KBM-7 (cell line): ENCODE measurements at regions of chr14 and their contacts with region 1.

Region 1: GRCh38 chr14:23068476-23069412 is 11.4 kb upstream of the CDH24 start:
- DNase-seq: peak; percentile 93

Region 2: DNA sequence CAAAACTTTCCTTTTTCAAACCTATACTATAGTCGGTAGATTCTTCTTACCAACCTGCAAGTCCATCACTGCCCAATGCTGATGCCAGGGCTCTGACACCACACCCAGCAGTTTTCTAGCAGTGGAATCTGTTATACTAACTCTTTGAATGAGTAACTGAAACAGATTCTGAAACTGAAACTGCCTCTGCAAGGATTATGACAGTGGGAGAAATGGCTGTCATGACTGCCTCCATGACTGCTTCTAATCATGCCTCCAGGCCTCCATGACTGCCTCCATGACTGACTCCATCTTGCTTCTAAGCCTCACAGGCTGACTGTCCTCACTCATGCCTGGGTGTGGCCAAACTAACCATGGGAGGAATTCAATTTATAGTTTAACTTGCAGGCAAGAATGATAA is 331.7 kb before region 1 on chr14:
- in situ Hi-C with region 1: no loop called
- DNase-seq: no peak

Region 3: DNA sequence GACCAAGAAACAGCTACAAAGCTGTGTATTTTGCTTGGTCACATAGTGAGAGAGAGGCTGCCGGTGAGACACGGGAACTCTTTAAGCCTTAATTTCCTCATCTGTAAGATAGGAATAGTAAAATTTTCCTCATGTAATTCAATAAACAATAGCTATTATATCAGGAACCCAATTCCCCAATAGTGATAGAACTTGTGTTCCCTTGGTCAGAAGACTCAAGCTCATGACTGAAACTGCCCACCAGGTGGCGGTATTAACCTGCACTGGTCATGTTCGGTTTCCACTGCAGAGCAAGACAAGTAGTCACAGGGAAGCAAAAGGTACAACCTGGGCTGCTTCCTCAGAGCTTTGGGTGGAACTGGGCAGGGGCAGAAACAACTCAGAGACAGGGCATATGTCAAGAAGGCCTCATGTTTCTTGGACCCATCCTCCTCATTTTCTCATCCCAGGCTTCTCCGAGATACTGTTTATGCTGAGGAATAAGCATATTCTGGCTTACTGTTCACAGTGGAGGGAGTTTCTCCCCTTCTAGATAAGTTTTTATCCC is 82.2 kb before region 1 on chr14:
- in situ Hi-C with region 1: loop called (anchors 10 kb)
- DNase-seq: peak; percentile 79